ENCODE measurements at regions of chr6 and their contacts with region 1.

Region 1: GRCh38 chr6:14210663-14211561 is 93.3 kb downstream of the CD83 start:
- DNase-seq: peak; percentile 96
- ATAC-seq: peak; percentile 96

Region 2: DNA sequence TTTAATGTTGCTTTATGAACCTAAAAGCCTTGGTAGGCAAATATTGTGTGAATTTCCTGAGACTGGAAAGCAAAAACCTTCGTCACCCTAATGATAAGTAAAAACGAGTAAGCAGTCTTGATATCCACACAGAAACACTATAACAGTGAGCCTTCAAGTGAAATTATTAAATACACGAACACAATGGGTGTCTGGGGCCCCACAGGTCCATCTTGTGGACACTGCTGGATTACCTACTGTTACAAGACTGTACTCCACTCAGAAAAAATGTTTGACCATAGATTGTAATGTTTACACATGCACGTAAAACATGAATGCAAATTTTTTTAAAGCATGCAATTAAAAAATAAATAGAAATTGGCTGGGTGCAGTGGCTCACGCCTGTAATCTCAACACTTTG is 373.5 kb after region 1 on chr6:
- intact Hi-C with region 1: loop called (anchors 10 kb)
- DNase-seq: no peak
- ATAC-seq: peak; percentile 67

Region 3: GRCh38 chr6:14799928-14800327 is 589.0 kb after region 1 on chr6:
- intact Hi-C with region 1: loop called (anchors 10 kb)
- DNase-seq: no peak
- ATAC-seq: peak; percentile 95

Region 4: DNA sequence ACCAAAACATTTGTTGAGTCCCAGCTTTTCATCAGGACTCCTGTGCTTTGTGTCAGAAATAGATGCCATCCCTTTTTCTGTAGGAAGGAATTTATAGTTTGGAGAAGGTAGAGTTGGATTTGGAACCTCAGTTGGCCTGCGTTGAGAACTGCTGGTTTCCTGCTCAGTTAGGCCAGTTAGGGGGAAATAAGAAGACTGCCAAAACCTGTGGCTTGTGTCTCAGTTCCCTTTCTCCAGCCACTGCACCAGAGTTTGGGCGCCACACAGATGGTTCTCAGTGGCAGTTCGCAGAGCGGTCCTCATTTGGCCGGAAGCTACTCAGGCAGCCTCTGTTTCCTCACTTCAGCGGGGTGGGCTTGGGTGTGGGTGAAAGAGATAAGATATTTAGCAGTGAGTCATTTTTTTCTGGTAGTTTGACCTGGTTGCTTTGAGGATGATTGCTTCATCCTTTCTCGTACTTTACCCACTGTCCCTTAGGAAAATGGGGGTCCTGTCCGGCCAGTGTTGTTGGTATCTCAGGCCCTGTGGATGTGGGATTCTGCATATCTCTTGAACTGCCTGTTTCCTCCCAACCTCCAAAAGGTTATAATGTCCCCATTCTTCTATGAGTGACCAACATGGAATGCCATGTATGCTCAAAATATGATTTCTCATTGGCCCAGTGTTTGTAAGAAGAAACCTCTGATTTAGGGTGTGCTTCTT is 1088.7 kb after region 1 on chr6:
- intact Hi-C with region 1: no loop called
- DNase-seq: no peak
- ATAC-seq: peak; percentile 62

Region 5: DNA sequence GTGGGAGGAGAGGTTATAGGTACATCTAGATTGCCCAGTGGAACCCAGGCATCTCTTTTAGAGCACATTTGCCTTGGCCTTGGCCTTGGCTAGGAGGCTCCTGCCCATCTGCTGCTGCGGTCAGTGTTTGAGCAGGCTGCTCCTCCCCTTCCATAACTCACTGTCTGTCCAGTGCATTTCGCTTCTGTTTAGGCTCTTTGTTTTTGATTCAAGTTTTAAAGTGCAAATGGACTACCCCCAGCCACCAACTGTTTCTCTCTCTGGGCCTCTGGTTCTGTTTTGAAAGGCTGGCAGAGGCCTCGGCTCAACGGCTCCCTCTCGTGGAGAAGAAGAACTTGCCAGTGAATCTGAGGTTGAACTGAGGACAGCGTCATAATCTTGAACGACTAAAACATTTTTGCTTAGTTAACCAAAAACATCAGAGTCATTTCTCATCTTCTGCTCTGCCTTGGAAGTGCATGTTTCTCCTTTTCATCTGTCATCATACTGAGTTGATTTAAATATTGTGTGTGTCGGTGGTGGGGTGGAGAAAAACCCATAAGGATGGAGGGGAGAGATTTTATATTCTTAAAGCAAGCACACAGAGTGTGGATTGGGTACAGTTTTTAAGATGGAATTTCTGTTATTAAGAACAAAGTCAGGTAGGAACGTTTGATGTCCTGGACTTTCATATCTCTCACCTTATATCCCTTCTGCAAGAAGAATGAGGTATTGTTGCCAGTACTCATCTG is 1280.5 kb after region 1 on chr6:
- intact Hi-C with region 1: loop called (anchors 5 kb)
- DNase-seq: no peak
- ATAC-seq: peak; percentile 76